Caco-2 (cell line): ENCODE measurements at regions of chr3 and their contacts with region 1.

Region 1: DNA sequence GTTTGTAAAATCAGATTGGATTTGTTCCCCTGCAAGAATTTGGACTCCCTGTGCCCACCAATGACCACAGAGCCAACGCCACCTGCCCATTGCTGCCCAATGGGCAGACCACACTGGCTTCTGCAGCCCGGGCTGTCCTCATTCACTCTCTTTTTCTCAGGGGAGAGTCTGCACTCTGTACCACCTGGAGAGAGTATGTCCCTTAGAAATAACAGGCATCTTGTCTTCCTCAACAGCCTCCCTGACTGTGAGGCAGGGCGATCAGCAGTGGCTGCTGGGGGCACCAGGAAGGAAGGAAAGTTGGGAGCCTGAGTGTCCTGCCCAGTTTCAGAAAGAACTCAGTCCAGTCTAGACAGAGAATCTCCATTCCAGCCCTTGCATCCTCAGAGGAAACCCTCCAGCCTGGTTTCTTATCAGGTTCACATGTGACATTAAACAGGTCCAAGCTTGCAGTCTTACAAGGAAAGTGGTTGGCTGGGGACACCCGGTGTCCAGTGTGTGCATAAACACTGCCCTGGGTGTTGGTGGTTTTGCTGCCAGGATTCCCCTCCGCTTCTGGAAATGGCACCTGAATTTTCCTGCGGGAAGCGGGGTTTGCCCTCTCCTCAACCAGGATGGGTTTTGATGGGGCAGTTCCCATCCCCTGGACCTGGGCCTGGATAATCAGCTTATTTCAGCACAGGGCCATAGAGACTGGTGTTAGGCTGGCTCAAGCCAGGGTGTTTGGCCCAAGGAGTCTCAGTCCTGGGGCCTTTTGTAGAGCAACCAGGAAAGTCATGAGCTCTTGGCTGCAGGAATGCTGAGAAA is 37.2 kb downstream of the SSUH2 start:
- DNase-seq: peak; percentile 69 to 73
- H3K4me3 ChIP-seq: no peak overlapping the region
- H3K4me3 Mint-ChIP-seq: no peak overlapping the region
- H3K27ac Mint-ChIP-seq: no peak overlapping the region
- H3K4me1 ChIP-seq: peaks cover 12% of the 10 kb centered on the region; the same call in 1 of the 2 replicates
- H3K4me1 Mint-ChIP-seq: no peaks in the 10 kb centered on the region
- H3K27me3 ChIP-seq: no peaks in the 10 kb centered on the region
- H3K27me3 Mint-ChIP-seq: no peaks in the 10 kb centered on the region
- CTCF ChIP-seq: peak; percentile 52 to 69

Region 2: DNA sequence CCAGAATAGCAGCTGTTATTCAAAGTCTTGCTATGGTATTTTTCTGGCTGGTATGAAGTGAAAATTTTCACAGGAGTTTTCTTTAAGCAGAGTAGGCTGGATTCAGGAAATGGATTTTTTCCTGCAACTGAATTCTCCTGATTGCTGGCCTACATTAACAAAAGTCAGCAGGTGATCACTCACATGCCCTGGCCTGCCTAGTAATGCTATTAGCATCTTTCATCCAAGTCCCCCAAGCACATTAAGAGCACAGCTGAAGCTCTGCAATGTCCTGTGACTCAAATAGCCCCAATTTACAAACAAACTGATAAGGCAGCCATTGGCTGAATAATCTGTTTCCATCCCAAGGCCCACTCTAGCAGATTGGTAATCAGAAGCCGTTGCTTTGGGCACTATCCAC is 794.1 kb before region 1 on chr3:
- CTCF ChIA-PET with region 1: no interaction called
- POLR2A ChIA-PET with region 1: no interaction called
- intact Hi-C with region 1: no loop called
- DNase-seq: no peak
- H3K4me3 ChIP-seq: no peak overlapping the region
- H3K4me3 Mint-ChIP-seq: no peak overlapping the region
- H3K27ac Mint-ChIP-seq: no peak overlapping the region
- H3K4me1 ChIP-seq: no peaks in the 10 kb centered on the region
- H3K4me1 Mint-ChIP-seq: no peaks in the 10 kb centered on the region
- H3K27me3 ChIP-seq: no peaks in the 10 kb centered on the region
- H3K27me3 Mint-ChIP-seq: peaks cover 7% of the 10 kb centered on the region
- CTCF ChIP-seq: no peak

Region 3: DNA sequence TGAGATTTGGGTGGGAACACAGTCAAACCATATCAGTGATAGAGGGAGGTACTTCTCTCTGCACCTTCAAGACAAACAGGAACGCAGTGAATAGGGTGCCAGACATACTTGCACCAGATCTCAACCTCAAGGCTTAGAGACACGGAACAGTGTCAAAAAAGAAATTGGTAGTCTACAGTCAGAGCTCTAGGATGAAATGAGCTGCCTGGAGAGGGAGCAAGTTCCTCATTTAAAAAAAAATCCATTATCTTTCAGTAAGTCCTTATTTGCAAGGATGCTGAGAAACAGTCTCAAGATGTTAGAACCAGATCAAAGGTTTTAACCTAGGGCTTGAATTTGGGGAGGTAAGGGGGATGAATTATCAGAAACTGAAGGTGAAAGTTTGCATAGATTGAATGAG is 126.1 kb before region 1 on chr3:
- CTCF ChIA-PET with region 1: no interaction called
- POLR2A ChIA-PET with region 1: no interaction called
- intact Hi-C with region 1: loop called (anchors 1 kb)
- DNase-seq: no peak
- H3K4me3 ChIP-seq: no peak overlapping the region
- H3K4me3 Mint-ChIP-seq: no peak overlapping the region
- H3K27ac Mint-ChIP-seq: no peak overlapping the region
- H3K4me1 ChIP-seq: peaks cover 34% of the 10 kb centered on the region
- H3K4me1 Mint-ChIP-seq: peaks cover 27% of the 10 kb centered on the region
- H3K27me3 ChIP-seq: no peaks in the 10 kb centered on the region
- H3K27me3 Mint-ChIP-seq: no peaks in the 10 kb centered on the region
- CTCF ChIP-seq: no peak